ENCODE measurements at regions of chr17 and their contacts with region 1.

Region 1: DNA sequence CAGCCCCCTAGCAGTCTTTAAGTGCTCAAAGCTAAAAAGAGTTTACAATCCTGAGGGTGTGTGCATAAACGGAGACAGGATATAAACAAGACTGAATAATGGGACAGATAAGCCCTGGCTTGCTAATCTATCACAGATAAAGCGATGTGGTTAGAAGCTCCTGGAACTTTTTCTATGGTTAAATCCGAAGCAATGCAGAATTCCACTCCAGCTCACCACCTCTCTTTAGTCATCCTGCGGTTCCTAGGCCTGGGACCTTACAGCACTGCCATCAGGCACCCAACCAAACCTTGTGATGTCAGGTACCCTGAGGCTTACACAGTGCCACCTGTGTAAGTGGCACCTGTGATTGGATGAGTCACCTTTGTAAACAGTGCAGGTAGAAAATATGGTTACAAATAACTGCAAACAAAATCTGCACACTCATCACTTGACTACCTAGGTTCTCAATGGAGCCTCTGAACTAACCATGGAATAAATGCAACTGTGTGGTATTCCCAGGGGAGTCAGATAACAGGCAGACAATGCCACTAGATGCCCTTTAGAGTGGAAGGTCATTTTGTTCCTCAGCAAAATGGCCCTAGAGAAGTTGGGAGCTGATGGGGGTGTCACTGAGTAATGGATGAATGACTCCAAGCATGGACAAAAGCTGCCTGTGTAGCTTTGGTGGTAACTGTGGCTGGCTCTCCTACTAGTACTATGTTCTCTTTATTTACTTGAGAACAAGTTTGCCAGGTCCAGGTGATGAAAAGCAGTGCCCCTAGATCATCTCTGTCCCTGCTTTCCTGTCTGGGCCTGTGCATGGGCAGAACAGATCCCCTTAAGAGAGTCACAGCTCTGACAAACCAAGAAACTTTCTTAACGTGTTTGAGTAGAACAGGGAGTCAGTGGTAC is 31.3 kb upstream of the B4GALNT2 start:
- H3K4me3 ChIP-seq: no peak overlapping the region
- H3K27ac ChIP-seq: peak overlapping the region; percentile 14; the same call in 1 of the 2 replicates
- H3K4me1 ChIP-seq: peaks cover 12% of the 10 kb centered on the region
- CTCF ChIP-seq: no peak

Region 2: GRCh38 chr17:48915459-48916282 is 185.6 kb before region 1 on chr17:
- CTCF ChIA-PET with region 1: no interaction called
- POLR2A ChIA-PET with region 1: interaction called, 11 read pairs
- H3K4me3 ChIP-seq: no peak overlapping the region
- H3K27ac ChIP-seq: no peak overlapping the region
- H3K4me1 ChIP-seq: peaks cover 3% of the 10 kb centered on the region
- CTCF ChIP-seq: no peak

Region 3: GRCh38 chr17:49038138-49038537 is 63.2 kb before region 1 on chr17:
- CTCF ChIA-PET with region 1: no interaction called
- POLR2A ChIA-PET with region 1: no interaction called
- H3K4me3 ChIP-seq: no peak overlapping the region
- H3K27ac ChIP-seq: no peak overlapping the region
- H3K4me1 ChIP-seq: no peaks in the 10 kb centered on the region
- CTCF ChIP-seq: no peak

Region 4: GRCh38 chr17:49063652-49064051 is 37.6 kb before region 1 on chr17:
- CTCF ChIA-PET with region 1: no interaction called
- POLR2A ChIA-PET with region 1: no interaction called
- H3K4me3 ChIP-seq: no peak overlapping the region
- H3K27ac ChIP-seq: no peak overlapping the region
- H3K4me1 ChIP-seq: peaks cover 6% of the 10 kb centered on the region
- CTCF ChIP-seq: no peak

Region 5: DNA sequence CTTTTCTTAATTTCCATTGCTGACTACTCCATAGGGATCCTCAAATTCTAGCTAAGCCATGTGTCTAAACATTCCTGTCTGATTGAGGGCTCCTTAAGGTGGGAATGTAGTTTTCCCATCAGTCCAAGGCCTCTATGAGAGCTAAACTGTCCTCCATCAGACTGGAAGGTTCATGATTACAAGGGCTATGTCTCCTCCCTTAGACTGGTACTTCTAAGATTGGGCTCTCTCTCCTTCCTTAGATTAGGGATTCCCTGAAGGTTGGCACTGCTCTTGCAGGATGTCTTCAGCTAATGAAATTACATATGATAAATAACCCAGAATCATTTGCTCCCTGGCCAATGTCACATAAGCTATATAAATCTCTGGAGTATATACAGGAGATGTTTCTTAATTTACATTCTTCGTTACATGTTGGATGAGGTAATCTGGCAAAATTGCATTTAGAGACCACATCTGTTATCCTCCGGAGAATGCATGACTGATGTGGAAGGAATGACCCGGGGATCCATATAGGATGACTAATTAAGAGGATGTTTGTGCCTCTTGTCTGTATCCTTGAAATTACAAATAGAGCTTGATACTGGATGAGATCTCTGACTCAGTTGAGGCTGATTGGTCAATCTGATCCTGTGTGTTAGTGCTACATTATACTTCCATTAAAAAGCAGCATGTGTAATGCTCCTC is 45.5 kb after region 1 on chr17:
- CTCF ChIA-PET with region 1: no interaction called
- POLR2A ChIA-PET with region 1: no interaction called
- H3K4me3 ChIP-seq: no peak overlapping the region
- H3K27ac ChIP-seq: no peak overlapping the region
- H3K4me1 ChIP-seq: no peaks in the 10 kb centered on the region
- CTCF ChIP-seq: no peak